HCT116 (cell line): ENCODE measurements at regions of chr12 and their contacts with region 1.

Region 1: GRCh38 chr12:53352331-53353256 is 16.4 kb upstream of the SP7 start:
- DNase-seq: peak; percentile 86
- ATAC-seq: peak; percentile 97
- H3K4me3 ChIP-seq: no peak overlapping the region
- H3K27ac ChIP-seq: peak overlapping the region; percentile 34; the same call in 1 of the 2 replicates
- H3K4me1 ChIP-seq: peaks cover 9 to 36% of the 10 kb centered on the region in 2 experiments; a peak in 3 of 4 replicates
- H3K27me3 ChIP-seq: no peaks in the 10 kb centered on the region
- CTCF ChIP-seq: peak; percentile 82 to 96 (median 89)
- POLR2A ChIP-seq: no peak
- RAD21 ChIP-seq: peak; percentile 99

Region 2: DNA sequence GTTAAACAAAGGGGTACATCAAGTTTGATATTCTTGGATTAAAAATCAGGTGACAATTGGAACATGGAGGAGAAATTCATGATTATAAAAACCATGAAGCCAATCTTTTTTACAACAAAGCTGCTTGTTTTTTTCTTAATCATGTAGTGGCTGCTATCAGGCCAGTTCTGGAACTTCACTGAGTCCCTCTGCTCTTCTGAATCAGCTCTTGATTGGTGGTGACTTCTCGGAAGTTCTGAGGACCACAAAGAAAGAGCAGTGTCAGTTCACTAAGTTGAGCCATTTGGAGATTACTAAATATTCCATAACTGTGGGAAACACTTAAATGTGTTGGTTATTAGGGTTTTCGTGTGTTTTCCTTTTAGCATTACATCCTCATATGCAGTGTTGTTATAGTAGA is 337.9 kb before region 1 on chr12:
- CTCF ChIA-PET with region 1: no interaction called
- POLR2A ChIA-PET with region 1: no interaction called
- RAD21 ChIA-PET with region 1: no interaction called
- intact Hi-C with region 1: no loop called
- DNase-seq: no peak
- ATAC-seq: no peak
- H3K4me3 ChIP-seq: no peak overlapping the region
- H3K27ac ChIP-seq: no peak overlapping the region
- H3K4me1 ChIP-seq: peaks cover 0 to 8% of the 10 kb centered on the region in 2 experiments; a peak in 2 of 4 replicates
- H3K27me3 ChIP-seq: no peaks in the 10 kb centered on the region
- CTCF ChIP-seq: no peak
- POLR2A ChIP-seq: no peak
- RAD21 ChIP-seq: no peak

Region 3: GRCh38 chr12:53071591-53072551 is 280.7 kb before region 1 on chr12:
- CTCF ChIA-PET with region 1: no interaction called
- POLR2A ChIA-PET with region 1: no interaction called
- RAD21 ChIA-PET with region 1: no interaction called
- intact Hi-C with region 1: no loop called
- DNase-seq: no peak
- ATAC-seq: no peak
- H3K4me3 ChIP-seq: no peak overlapping the region
- H3K27ac ChIP-seq: no peak overlapping the region
- H3K4me1 ChIP-seq: peaks cover 6 to 42% of the 10 kb centered on the region in 2 experiments
- H3K27me3 ChIP-seq: no peaks in the 10 kb centered on the region
- CTCF ChIP-seq: 0 out of 6 replicates have a peak, but pooled peaks of 1 of the 3 experiments have one; percentile 15
- POLR2A ChIP-seq: no peak
- RAD21 ChIP-seq: no peak; the same call in 1 of the 2 replicates

Region 4: GRCh38 chr12:53427905-53428594 is 75.5 kb after region 1 on chr12:
- CTCF ChIA-PET with region 1: interaction called, 81 read pairs
- POLR2A ChIA-PET with region 1: interaction called, 3 read pairs
- RAD21 ChIA-PET with region 1: interaction called in 1 of 2 experiments, 3 read pairs
- intact Hi-C with region 1: no loop called
- DNase-seq: peak; percentile 80
- ATAC-seq: peak; percentile 96
- H3K4me3 ChIP-seq: no peak overlapping the region
- H3K27ac ChIP-seq: no peak overlapping the region
- H3K4me1 ChIP-seq: peaks cover 5 to 20% of the 10 kb centered on the region in 2 experiments
- H3K27me3 ChIP-seq: no peaks in the 10 kb centered on the region
- CTCF ChIP-seq: no peak
- POLR2A ChIP-seq: no peak
- RAD21 ChIP-seq: no peak

Region 5: DNA sequence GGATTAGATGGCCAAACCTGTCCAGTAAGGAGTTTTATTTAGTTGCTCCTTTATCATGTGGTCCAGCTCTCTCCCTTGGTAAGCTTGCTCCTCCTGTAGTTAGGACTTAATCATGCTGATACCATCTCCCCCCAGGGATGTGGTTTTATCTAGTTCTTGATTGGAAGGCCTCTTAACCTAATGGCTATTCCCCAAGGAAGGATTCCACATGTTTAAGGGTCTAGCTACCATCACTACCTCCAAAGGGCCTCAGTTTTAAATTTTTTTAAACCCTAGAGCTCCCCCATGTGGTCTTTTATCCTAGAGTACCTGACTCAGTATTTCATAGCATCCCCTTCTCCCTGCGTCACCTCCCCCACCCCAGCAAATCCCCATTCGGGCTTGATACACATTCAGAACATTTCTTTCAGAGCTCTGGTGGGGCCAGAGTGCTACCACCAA is 124.2 kb after region 1 on chr12:
- CTCF ChIA-PET with region 1: interaction called, 19 read pairs
- POLR2A ChIA-PET with region 1: interaction called, 3 read pairs
- RAD21 ChIA-PET with region 1: interaction called in 1 of 2 experiments, 7 read pairs
- intact Hi-C with region 1: no loop called
- DNase-seq: no peak
- ATAC-seq: peak; percentile 67
- H3K4me3 ChIP-seq: no peak overlapping the region
- H3K27ac ChIP-seq: 0 out of 2 replicates have a peak overlapping the region, but pooled peaks have one; percentile 5
- H3K4me1 ChIP-seq: peaks cover 0 to 32% of the 10 kb centered on the region in 2 experiments; a peak in 2 of 4 replicates
- H3K27me3 ChIP-seq: no peaks in the 10 kb centered on the region
- CTCF ChIP-seq: peak; percentile 25 to 53 (median 39); a peak in 5 of 6 replicates
- POLR2A ChIP-seq: no peak
- RAD21 ChIP-seq: 0 out of 2 replicates have a peak, but pooled peaks have one; percentile 28

Region 6: GRCh38 chr12:53508534-53509199 is 156.1 kb after region 1 on chr12:
- CTCF ChIA-PET with region 1: interaction called, 21 read pairs
- POLR2A ChIA-PET with region 1: no interaction called
- RAD21 ChIA-PET with region 1: no interaction called
- intact Hi-C with region 1: loop called (anchors 1 kb)
- DNase-seq: no peak
- ATAC-seq: peak; percentile 98
- H3K4me3 ChIP-seq: no peak overlapping the region
- H3K27ac ChIP-seq: 0 out of 2 replicates have a peak overlapping the region, but pooled peaks have one; percentile 23
- H3K4me1 ChIP-seq: peaks cover 0 to 6% of the 10 kb centered on the region in 2 experiments; a peak in 1 of 4 replicates
- H3K27me3 ChIP-seq: no peaks in the 10 kb centered on the region
- CTCF ChIP-seq: peak in 2 of 3 experiments; percentile 94 to 95; a peak in 4 of 6 replicates
- POLR2A ChIP-seq: no peak
- RAD21 ChIP-seq: no peak